Mammary epithelial cell (primary cell): ENCODE measurements at regions of chr3 and their contacts with region 1.

Region 1: GRCh38 chr3:103494011-103494410 is 1059.2 kb downstream of the ZPLD1 start:
- DNase-seq: no peak
- H3K4me3 ChIP-seq: no peak overlapping the region
- H3K27ac ChIP-seq: no peak overlapping the region
- H3K4me1 ChIP-seq: no peaks in the 10 kb centered on the region
- H3K27me3 ChIP-seq: no peaks in the 10 kb centered on the region
- CTCF ChIP-seq: no peak

Region 2: DNA sequence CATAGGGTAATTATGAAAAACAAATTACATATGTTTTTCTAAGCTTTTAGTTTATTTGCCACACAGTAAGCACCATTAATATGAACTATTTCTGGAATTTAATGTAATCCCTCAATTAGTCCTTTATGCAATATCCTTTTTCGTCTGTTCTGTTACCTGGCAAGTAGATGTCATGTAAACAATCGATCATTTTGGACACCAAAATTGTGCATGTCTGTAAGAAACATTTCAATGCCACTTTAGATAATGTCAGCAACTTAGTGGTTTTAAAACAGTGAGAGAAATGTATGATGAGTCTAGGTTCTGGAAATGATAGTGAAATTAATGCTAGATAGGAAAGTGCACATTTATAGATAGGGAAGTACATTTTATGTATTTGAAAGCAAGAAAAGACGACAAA is 72.6 kb before region 1 on chr3:
- CTCF ChIA-PET with region 1: no interaction called
- dilution Hi-C with region 1: loop called (anchors 5 kb)
- in situ Hi-C with region 1: no loop called
- intact Hi-C with region 1: no loop called
- DNase-seq: no peak
- H3K4me3 ChIP-seq: no peak overlapping the region
- H3K27ac ChIP-seq: no peak overlapping the region
- H3K4me1 ChIP-seq: no peaks in the 10 kb centered on the region
- H3K27me3 ChIP-seq: peaks cover 2% of the 10 kb centered on the region
- CTCF ChIP-seq: no peak

Region 3: DNA sequence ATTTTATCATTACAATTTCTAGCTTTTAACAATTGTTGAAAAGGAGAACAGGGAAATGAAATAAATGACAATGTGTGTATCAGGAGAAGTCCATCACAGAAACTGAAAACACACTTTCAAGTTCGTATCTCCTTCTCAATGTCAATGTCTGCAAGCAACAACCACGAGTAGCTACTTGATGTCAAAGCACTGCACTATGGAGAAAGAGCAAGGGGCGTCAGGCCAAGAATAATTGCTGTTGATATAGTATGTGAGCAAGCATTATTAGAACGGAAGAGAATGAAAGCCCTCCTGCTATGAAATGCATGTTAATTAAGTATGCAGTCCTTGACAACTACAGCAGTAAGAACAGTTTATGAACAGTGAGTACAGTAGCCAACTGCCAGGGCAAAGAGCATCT is 190.9 kb after region 1 on chr3:
- CTCF ChIA-PET with region 1: no interaction called
- dilution Hi-C with region 1: no loop called
- in situ Hi-C with region 1: no loop called
- intact Hi-C with region 1: no loop called
- DNase-seq: no peak
- H3K4me3 ChIP-seq: no peak overlapping the region
- H3K27ac ChIP-seq: no peak overlapping the region
- H3K4me1 ChIP-seq: no peaks in the 10 kb centered on the region
- H3K27me3 ChIP-seq: peaks cover 7% of the 10 kb centered on the region
- CTCF ChIP-seq: no peak